ENCODE measurements at regions of chr4 and their contacts with region 1.

Region 1: DNA sequence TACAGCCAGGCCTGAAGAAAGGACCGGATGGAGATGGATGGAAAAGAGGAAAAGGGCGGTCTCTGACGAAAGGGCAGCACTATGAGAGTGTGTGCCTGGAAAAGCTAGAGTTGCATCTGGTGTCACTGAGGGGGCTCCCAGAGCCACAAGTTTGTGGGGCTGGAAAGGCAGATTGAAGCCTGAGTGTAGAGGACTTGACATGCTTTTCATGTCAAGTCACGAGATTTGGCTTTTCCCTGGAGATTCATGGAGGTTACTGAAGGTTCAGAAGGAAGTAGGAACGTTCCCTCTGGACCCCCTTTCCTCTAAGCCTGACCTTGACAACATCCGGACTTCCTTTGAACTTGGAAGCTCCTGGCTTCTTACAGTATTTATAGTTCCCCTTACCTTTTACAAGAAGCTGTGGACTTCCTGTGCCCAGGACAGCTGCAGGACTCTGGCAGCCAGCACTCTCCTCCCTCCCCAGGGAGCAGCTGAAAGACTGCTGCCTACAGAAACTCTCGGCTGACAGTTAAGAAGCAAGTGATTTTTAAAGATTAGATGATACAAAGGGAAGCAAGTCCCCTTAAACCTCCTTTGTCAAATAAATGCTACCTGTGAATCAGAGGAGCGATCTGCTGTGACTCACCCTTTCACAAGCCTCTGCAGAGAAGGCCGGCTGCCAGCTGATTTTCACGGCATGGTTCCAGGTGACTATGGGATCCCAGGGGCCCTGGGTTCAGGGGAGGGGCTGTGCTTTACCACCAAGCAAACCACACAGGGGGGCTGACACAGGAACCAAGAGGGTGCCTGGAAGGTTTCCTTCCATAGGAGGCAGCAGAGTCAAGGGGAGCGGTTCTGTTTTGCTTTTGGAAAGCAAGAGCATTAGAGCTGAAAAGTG is 72.9 kb upstream of the STIM2 start:
- DNase-seq: peak; percentile 88
- H3K4me3 ChIP-seq: peak overlapping the region; percentile 59
- H3K27ac ChIP-seq: peak overlapping the region; percentile 84
- H3K4me1 ChIP-seq: peaks cover 42% of the 10 kb centered on the region
- CTCF ChIP-seq: peak; percentile 86

Region 2: DNA sequence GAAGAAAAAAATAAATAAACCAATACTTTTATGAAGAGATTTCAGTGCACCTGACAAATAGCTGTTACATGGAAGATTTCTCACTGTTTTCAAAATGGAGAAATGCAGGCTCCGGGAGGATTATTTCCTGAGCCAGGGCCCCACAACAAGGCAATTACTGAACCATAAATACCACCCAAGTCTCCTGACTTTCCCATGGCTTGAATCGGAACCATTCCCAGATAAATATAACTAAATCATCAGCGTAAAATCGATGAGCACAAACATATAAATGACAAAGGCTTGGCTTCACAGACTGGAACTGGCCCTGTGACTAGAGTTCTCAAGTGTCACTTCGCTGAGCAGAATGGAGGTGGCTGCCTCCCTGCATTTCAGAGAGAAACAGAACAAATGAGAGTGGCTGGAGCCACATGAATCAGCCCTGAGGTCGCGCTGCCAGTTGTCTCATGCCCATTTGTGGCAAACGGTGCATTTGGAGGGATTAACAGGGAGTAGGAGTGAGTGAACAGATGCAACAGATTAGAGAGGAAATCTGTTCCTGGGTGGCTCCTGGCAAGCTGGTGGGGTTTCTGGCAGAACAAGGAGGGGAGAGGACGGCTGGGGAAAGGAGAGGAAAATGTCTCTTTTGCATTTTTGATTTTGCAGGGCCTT is 15.6 kb after region 1 on chr4:
- CTCF ChIA-PET with region 1: interaction called, 3 read pairs
- POLR2A ChIA-PET with region 1: interaction called, 11 read pairs
- intact Hi-C with region 1: no loop called
- DNase-seq: no peak
- H3K4me3 ChIP-seq: no peak overlapping the region
- H3K27ac ChIP-seq: no peak overlapping the region
- H3K4me1 ChIP-seq: peaks cover 18% of the 10 kb centered on the region
- CTCF ChIP-seq: no peak

Region 3: DNA sequence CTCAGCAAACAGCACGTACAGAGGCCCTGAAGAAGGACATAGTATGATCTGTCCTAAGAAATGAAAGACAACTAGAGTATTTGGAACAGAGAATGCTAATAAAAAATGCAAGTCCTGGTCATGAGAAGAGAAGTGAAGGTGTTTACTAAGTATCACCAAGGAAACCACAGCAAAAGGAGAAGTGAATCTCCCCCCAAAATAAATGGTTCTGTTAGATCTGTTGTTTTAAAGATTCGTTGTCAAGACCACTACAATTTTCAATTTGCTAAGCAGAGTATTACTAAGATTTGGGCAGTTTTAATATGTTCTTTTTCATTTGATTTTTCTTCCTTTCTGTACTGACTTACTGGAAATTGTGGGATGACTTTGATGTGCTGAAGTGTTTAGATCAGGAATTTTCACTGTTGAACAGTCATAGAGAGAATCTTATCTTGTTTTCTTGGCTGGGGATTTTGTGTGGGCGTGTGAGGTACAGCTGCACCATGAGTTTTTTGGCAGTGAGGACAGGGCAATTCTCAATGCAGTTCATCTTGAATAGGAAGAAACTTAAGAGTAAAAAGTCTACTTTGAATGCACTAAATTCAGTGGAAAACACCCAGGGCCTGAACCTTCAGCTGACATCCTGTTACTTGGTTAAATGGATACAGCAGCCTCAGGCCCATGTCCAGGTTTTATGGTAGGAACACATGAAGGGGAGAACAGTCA is 205.1 kb after region 1 on chr4:
- CTCF ChIA-PET with region 1: no interaction called
- POLR2A ChIA-PET with region 1: interaction called, 4 read pairs
- intact Hi-C with region 1: loop called (anchors 5 kb)
- DNase-seq: peak; percentile 89
- H3K4me3 ChIP-seq: peak overlapping the region; percentile 49
- H3K27ac ChIP-seq: peak overlapping the region; percentile 89
- H3K4me1 ChIP-seq: peaks cover 59% of the 10 kb centered on the region
- CTCF ChIP-seq: no peak

Region 4: GRCh38 chr4:27024805-27025204 is 237.1 kb after region 1 on chr4:
- CTCF ChIA-PET with region 1: no interaction called
- POLR2A ChIA-PET with region 1: no interaction called
- intact Hi-C with region 1: no loop called
- DNase-seq: no peak
- H3K4me3 ChIP-seq: no peak overlapping the region
- H3K27ac ChIP-seq: no peak overlapping the region
- H3K4me1 ChIP-seq: peaks cover 12% of the 10 kb centered on the region
- CTCF ChIP-seq: no peak

Measured in OCI-LY7 (cell line).